A549 (cell line): ENCODE measurements at regions of chr21 and their contacts with region 1.

Region 1: GRCh38 chr21:40120940-40121575 is 253.8 kb downstream of the PCP4 start:
- DNase-seq: peak; percentile 4 to 11
- ATAC-seq: no peak
- H3K4me3 ChIP-seq: no peak overlapping the region
- H3K27ac ChIP-seq: no peak overlapping the region
- H3K4me1 ChIP-seq: no peaks in the 10 kb centered on the region
- CTCF ChIP-seq: peak; percentile 58
- EP300 ChIP-seq: no peak
- POLR2A ChIP-seq: no peak
- RAD21 ChIP-seq: peak; percentile 58 to 64

Region 2: DNA sequence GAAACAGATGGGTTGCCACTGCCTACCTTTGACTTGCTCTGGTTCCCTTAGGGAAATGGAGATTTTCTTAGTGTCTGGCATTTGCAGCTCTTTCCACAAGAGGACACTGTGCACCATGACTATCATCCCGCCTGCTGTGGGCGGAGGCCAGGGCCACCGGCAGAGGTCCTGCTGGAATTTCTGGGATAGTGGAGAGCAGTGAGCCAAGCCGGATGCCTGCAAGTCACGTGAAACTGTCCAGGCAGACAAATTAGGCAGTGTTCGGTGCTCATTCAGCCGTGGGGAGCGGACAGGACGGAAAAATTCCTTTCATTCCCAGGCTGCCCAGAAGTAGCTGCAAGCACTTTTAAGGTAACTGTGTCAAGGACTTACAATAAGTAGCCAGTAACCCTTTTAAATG is 332.7 kb before region 1 on chr21:
- CTCF ChIA-PET with region 1: interaction called, 30 read pairs
- POLR2A ChIA-PET with region 1: interaction called, 3 read pairs
- DNase-seq: peak; percentile 67 to 72
- ATAC-seq: peak; percentile 99 to 100
- H3K4me3 ChIP-seq: no peak overlapping the region
- H3K27ac ChIP-seq: no peak overlapping the region
- H3K4me1 ChIP-seq: no peaks in the 10 kb centered on the region
- CTCF ChIP-seq: peak; percentile 64
- EP300 ChIP-seq: no peak
- POLR2A ChIP-seq: no peak
- RAD21 ChIP-seq: peak; percentile 72 to 73